ENCODE measurements at regions of chr12 and their contacts with region 1.

Region 1: DNA sequence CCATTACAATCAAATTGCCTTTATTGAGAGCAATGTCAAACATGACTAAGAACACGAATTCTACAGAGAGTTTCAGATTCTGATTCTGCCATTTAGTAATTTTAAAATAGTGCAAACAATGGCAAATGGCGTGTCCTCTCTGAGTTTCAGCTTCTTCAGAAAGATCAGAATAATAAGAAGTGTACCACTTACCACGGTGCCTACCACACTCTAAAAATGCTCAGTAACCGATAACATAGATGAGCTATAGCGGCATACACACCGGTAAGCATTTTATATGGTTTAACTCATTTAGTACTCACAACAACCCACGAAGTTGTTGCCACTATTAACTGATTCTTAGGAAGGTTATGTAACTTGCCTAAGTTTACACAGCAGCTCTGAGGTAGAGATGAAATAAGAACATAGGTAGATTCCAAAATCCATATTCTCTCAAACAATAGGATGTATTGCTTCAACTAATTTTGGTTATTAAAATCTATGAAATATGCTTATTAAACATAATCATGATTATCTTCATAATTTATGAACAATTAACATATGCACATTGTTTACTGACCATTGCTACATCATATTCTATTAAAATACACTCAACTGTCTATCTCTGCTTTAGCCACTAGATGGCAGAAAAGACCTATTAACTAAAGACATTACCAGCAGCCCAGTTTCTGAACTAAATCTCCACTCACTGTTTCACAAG is 38.3 kb downstream of the SLC6A15 start:
- DNase-seq: no peak
- ATAC-seq: peak; percentile 71
- H3K4me3 Mint-ChIP-seq: no peak overlapping the region
- H3K27ac Mint-ChIP-seq: no peak overlapping the region
- H3K4me1 Mint-ChIP-seq: no peaks in the 10 kb centered on the region
- H3K27me3 Mint-ChIP-seq: peaks cover 4% of the 10 kb centered on the region
- CTCF ChIP-seq: peak; percentile 81

Region 2: GRCh38 chr12:84805474-84805858 is 68.8 kb before region 1 on chr12:
- CTCF ChIA-PET with region 1: no interaction called
- POLR2A ChIA-PET with region 1: no interaction called
- intact Hi-C with region 1: no loop called
- DNase-seq: no peak
- ATAC-seq: no peak
- H3K4me3 Mint-ChIP-seq: no peak overlapping the region
- H3K27ac Mint-ChIP-seq: no peak overlapping the region
- H3K4me1 Mint-ChIP-seq: no peaks in the 10 kb centered on the region
- H3K27me3 Mint-ChIP-seq: no peaks in the 10 kb centered on the region
- CTCF ChIP-seq: no peak

Region 3: DNA sequence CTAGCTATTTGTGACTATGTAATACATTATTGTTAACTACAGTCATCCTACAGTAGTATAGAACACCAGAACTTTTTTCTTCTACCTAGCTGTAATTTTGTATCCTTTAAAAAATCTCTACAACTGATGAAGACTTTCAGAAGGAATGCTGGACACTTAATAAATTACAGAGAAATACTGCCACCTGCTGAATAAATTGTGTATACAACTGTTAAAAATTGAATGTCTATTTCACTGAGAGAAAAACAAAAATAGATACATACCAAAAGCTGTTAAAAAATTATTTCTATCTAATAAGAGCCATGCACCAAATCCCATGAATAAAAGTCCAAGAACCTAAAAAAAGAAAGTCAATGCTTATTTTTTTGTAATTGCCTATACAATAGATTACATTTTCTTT is 155.2 kb after region 1 on chr12:
- CTCF ChIA-PET with region 1: interaction called, 124 read pairs
- POLR2A ChIA-PET with region 1: no interaction called
- intact Hi-C with region 1: loop called (anchors 1 kb)
- DNase-seq: no peak
- ATAC-seq: no peak
- H3K4me3 Mint-ChIP-seq: no peak overlapping the region
- H3K27ac Mint-ChIP-seq: no peak overlapping the region
- H3K4me1 Mint-ChIP-seq: no peaks in the 10 kb centered on the region
- H3K27me3 Mint-ChIP-seq: peaks cover 9% of the 10 kb centered on the region
- CTCF ChIP-seq: peak; percentile 67

Region 4: GRCh38 chr12:85057370-85057963 is 183.2 kb after region 1 on chr12:
- CTCF ChIA-PET with region 1: interaction called, 23 read pairs
- POLR2A ChIA-PET with region 1: no interaction called
- intact Hi-C with region 1: loop called (anchors 10 kb)
- DNase-seq: peak; percentile 41
- ATAC-seq: no peak
- H3K4me3 Mint-ChIP-seq: no peak overlapping the region
- H3K27ac Mint-ChIP-seq: no peak overlapping the region
- H3K4me1 Mint-ChIP-seq: no peaks in the 10 kb centered on the region
- H3K27me3 Mint-ChIP-seq: no peaks in the 10 kb centered on the region
- CTCF ChIP-seq: peak; percentile 81